CD8-positive, alpha-beta memory T cell (primary cell): ENCODE measurements at regions of chr3 and their contacts with region 1.

Region 1: GRCh38 chr3:105752744-105753415 is 115.9 kb downstream of the CBLB start:
- DNase-seq: peak; percentile 23 to 86 (median 62)
- H3K4me3 ChIP-seq: peak overlapping the region; percentile 51
- H3K4me3 Mint-ChIP-seq: peak overlapping the region; percentile 70 to 83 (median 76)
- H3K27ac ChIP-seq: peak overlapping the region; percentile 43
- H3K27ac Mint-ChIP-seq: peak overlapping the region; percentile 89 to 100 (median 94)
- H3K4me1 ChIP-seq: peaks cover 94% of the 10 kb centered on the region
- H3K4me1 Mint-ChIP-seq: peaks cover 82 to 97% (median 96%) of the 10 kb centered on the region in 3 donors
- H3K27me3 ChIP-seq: no peaks in the 10 kb centered on the region
- H3K27me3 Mint-ChIP-seq: peaks cover 0 to 3% of the 10 kb centered on the region in 2 donors

Region 2: DNA sequence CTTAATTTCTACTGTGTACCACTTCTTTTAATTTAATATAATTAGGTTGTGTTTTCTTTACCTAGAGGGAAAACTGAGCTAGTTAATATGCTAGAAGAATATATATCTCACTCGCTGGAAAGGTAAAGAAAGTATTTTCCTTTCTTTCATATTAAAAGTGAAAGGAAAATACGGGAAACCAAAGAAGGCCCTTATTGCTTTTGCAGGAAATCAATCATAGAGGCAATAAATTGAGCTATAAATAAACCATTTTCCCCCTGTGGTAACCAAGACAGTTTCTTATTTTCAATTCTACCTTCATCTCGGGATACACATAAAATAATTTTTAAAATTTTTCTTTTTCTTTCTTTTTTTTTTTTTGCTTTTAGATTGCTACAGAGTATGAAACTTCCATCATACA is 14.3 kb after region 1 on chr3:
- CTCF ChIA-PET with region 1: interaction called, 5 read pairs
- POLR2A ChIA-PET with region 1: interaction called, 10 read pairs
- DNase-seq: no peak
- H3K4me3 ChIP-seq: no peak overlapping the region
- H3K4me3 Mint-ChIP-seq: peak overlapping the region; percentile 41 to 77 (median 66)
- H3K27ac ChIP-seq: no peak overlapping the region
- H3K27ac Mint-ChIP-seq: peak overlapping the region; percentile 28 to 90 (median 61)
- H3K4me1 ChIP-seq: peaks cover 70% of the 10 kb centered on the region
- H3K4me1 Mint-ChIP-seq: peaks cover 88 to 98% (median 98%) of the 10 kb centered on the region in 3 donors
- H3K27me3 ChIP-seq: no peaks in the 10 kb centered on the region
- H3K27me3 Mint-ChIP-seq: no peaks in the 10 kb centered on the region